Ovary (tissue), 10 donors: ENCODE measurements at regions of chr12 and their contacts with region 1.

Region 1: DNA sequence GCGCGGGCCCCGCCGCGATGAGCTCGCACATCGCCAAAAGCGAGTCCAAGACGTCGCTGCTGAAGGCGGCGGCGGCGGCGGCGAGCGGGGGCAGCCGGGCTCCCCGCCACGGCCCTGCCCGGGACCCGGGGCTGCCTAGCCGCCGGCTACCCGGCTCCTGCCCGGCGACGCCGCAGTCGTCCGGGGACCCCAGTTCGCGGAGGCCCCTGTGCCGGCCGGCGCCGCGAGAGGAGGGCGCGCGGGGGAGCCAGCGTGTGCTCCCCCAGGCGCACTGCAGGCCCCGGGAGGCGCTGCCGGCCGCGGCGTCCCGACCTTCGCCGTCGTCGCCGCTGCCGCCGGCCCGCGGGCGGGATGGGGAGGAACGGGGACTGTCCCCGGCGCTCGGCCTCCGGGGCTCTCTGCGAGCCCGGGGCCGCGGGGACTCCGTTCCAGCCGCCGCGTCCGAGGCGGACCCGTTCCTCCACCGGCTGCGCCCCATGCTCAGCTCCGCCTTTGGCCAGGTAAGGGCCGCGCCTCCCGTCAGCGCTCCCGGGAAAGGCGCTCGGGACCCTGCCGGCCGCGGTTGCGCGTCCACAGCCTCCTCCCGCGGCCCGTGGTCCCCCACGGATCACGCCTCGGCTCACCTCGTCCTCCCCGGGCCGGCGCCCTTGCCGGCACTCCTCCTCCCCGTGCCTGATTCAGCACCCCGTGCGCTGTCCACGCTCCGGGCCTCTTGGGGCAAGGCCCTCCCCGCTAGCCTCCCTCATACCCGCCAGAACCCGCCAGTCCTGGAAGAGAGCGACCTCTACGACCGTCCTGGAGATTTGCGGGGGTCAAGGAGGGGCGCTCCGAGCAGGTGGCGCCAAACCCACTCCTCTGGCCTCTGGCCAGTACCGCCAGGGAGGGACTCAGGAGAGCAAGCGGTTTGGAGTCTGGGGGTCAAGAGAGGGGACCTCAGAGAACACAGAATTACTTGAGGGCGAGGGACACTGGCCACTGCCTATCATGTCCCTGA is 711 bp downstream of the CABP1 start:
- DNase-seq: peak in 4 of 5 donors; percentile 22 to 68 (median 44)
- H3K4me3 ChIP-seq: peak overlapping the region; percentile 26
- H3K27ac ChIP-seq: no peak overlapping the region
- H3K4me1 ChIP-seq: peaks cover 9% of the 10 kb centered on the region
- H3K27me3 ChIP-seq: no peaks in the 10 kb centered on the region
- CTCF ChIP-seq: no peak
- EP300 ChIP-seq: no peak
- POLR2A ChIP-seq: no peak

Region 2: DNA sequence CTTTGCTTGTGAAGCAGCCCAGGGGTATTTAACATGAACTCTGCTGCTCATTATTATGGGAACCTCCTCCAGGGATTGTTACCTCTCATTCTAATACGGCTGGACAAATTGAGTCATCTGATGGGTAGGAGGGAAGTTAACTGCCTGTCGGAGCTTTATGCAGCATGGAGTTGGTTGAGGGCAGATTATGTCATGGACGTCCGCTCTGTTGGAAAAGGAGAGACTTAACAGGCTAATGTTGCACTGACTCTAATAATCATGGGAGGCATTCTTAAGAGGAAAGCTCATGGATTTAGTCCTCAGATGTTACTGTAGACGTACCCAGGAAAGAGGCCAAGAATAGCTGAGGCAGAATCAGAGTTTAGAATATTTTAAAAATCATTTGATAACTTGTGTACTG is 69.8 kb before region 1 on chr12:
- intact Hi-C with region 1: no loop called
- DNase-seq: no peak
- H3K4me3 ChIP-seq: no peak overlapping the region
- H3K27ac ChIP-seq: no peak overlapping the region
- H3K4me1 ChIP-seq: no peaks in the 10 kb centered on the region
- H3K27me3 ChIP-seq: no peaks in the 10 kb centered on the region
- CTCF ChIP-seq: no peak
- EP300 ChIP-seq: no peak
- POLR2A ChIP-seq: no peak

Region 3: GRCh38 chr12:120677765-120678473 is 36.8 kb after region 1 on chr12:
- intact Hi-C with region 1: no loop called
- DNase-seq: no peak
- H3K4me3 ChIP-seq: no peak overlapping the region
- H3K27ac ChIP-seq: no peak overlapping the region
- H3K4me1 ChIP-seq: no peaks in the 10 kb centered on the region
- H3K27me3 ChIP-seq: no peaks in the 10 kb centered on the region
- CTCF ChIP-seq: no peak
- EP300 ChIP-seq: no peak
- POLR2A ChIP-seq: no peak

Region 4: DNA sequence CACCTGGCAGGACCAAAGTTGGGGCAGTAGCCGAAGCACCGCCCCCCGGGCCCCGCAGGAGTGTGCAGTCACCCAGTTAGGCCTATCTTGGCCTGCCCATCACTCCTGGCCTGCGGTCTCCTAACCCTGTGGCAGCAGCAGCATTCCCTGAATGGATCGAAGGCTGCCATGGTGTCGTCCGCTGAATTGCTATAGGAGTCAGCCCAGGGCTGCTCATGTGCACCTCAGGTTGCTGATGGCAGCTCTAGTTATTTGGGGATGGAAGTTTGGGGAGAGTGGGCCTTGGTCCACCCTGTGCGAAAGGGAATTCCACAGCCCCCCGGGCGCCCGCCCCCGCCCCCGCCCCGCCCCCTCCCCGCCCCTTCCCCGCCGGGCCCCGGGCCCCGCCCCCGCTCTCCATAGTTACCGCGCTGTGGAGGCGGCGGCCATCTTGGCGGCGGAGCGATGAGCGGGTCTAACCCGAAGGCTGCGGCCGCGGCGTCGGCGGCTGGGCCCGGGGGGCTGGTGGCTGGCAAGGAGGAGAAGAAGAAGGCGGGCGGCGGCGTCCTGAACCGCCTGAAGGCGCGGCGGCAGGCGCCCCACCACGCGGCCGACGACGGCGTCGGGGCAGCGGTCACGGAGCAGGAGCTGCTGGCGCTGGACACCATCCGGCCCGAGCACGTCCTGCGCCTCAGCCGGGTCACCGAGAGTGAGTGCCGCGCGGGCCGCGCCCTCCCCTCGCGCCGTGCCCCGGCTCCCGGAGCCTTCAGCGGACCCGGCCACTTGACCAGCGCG is 69.1 kb after region 1 on chr12 and contains the start of gene UNC119B:
- intact Hi-C with region 1: loop called (anchors 5 to 10 kb)
- DNase-seq: peak; percentile 64 to 83 (median 80)
- H3K4me3 ChIP-seq: peak within 1 kb of the TSS; percentile 64
- H3K27ac ChIP-seq: peak within 1 kb of the TSS; percentile 56 to 76
- H3K4me1 ChIP-seq: peaks cover 4% of the 10 kb centered on the region
- H3K27me3 ChIP-seq: no peaks in the 10 kb centered on the region
- CTCF ChIP-seq: peak in 1 of 3 donors; percentile 6
- EP300 ChIP-seq: no peak
- POLR2A ChIP-seq: peak; percentile 53
- total RNA-seq, gene UNC119B: 18.4 to 54.4 (median 46.2) TPM

Region 5: GRCh38 chr12:120961604-120962531 is 320.7 kb after region 1 on chr12:
- intact Hi-C with region 1: loop called in 2 of 4 experiments (anchors 5 to 10 kb)
- DNase-seq: no peak
- H3K4me3 ChIP-seq: no peak overlapping the region
- H3K27ac ChIP-seq: no peak overlapping the region
- H3K4me1 ChIP-seq: no peaks in the 10 kb centered on the region
- H3K27me3 ChIP-seq: no peaks in the 10 kb centered on the region
- CTCF ChIP-seq: no peak
- EP300 ChIP-seq: no peak
- POLR2A ChIP-seq: no peak

Region 6: GRCh38 chr12:121417847-121418246 is 776.7 kb after region 1 on chr12:
- intact Hi-C with region 1: no loop called
- DNase-seq: no peak
- H3K4me3 ChIP-seq: no peak overlapping the region
- H3K27ac ChIP-seq: no peak overlapping the region
- H3K4me1 ChIP-seq: no peaks in the 10 kb centered on the region
- H3K27me3 ChIP-seq: no peaks in the 10 kb centered on the region
- CTCF ChIP-seq: no peak
- EP300 ChIP-seq: no peak
- POLR2A ChIP-seq: no peak